ENCODE measurements at regions of chr3 and their contacts with region 1.

Region 1: DNA sequence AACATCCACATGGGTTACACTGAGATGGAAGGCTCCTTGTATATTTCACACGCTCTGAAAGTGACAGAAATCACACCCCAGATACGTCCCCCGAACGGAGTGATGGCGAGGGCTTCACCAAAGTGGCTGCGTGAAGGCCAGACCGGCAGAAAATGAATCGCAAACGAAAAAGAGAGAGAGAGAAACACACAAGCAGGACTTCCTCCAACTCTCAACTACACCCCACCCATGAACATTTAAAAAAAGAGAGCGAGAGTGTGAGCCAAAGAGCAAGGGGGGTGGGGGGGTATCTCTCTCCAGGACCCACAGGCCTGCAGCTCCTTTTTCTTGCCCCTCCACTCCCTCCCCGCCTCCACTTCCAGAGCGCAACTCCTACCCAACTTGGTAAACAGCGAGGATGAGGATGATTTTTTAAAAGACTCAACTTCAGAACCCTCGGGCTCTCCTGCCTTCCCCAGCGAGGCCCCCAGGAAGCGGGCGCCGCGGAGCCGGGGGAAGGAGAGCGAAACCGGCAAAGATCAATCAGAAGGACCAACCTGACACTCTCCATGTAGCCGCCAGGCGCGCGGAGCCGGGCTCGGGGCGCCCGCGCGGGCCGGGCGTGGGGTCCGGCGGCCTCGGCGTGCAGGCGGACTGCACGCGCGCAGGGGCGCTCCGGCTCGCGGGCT is 519.1 kb downstream of the FOXP1 start:
- DNase-seq: peak; percentile 69
- H3K4me3 Mint-ChIP-seq: no peak overlapping the region
- H3K27ac Mint-ChIP-seq: no peak overlapping the region
- H3K4me1 Mint-ChIP-seq: peaks cover 51% of the 10 kb centered on the region
- H3K27me3 Mint-ChIP-seq: no peaks in the 10 kb centered on the region

Region 2: DNA sequence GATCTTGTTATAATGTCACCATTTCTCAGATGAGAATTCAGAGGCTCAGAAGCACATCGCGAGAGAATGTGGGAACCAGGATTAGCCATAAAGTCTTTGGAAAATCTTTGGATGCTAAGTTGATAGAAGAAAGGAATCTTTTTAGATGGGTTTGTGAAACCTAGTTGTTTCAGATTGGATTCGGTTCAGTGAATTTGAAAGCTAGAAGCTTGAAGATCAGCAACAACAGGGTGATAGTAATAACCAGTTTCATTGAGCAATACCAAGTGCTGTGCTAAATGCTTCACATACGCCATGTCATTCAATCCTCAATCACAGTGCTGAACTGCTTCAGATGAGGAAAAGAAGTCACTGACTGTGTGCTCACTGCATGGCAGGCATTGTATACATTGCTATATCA is 1372.6 kb before region 1 on chr3:
- CTCF ChIA-PET with region 1: no interaction called
- intact Hi-C with region 1: no loop called
- DNase-seq: no peak
- H3K4me3 Mint-ChIP-seq: no peak overlapping the region
- H3K27ac Mint-ChIP-seq: no peak overlapping the region
- H3K4me1 Mint-ChIP-seq: no peaks in the 10 kb centered on the region
- H3K27me3 Mint-ChIP-seq: peaks cover 3% of the 10 kb centered on the region

Region 3: DNA sequence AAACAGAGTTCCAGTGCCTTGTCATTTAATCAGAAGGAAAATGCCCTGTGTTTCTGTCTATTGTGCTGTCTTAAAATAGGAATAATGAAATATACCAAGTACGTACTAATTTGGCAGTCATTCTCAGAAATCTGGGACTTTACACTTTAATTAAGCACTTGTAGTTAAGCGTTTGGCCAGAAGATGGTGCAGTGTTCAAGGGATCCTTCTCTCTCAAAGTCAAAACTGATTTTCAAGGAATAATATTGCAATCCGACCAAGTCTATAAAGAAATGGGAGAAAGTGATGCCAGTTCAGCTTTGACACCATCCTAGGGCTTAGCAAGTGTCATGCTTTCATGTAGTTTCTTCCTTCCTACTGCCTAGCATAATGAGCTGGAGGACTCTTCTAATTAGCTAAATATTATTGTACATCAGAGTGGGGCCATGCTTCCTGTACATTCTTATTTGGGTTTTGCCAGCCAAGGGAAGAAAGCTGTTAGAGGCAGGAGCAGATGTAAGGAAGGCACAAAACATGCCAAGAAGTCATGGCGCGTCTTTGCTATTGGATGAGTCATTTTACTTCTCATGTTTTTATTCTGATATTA is 1000.1 kb before region 1 on chr3:
- CTCF ChIA-PET with region 1: no interaction called
- intact Hi-C with region 1: no loop called
- DNase-seq: peak; percentile 26
- H3K4me3 Mint-ChIP-seq: no peak overlapping the region
- H3K27ac Mint-ChIP-seq: no peak overlapping the region
- H3K4me1 Mint-ChIP-seq: no peaks in the 10 kb centered on the region
- H3K27me3 Mint-ChIP-seq: peaks cover 15% of the 10 kb centered on the region

Region 4: DNA sequence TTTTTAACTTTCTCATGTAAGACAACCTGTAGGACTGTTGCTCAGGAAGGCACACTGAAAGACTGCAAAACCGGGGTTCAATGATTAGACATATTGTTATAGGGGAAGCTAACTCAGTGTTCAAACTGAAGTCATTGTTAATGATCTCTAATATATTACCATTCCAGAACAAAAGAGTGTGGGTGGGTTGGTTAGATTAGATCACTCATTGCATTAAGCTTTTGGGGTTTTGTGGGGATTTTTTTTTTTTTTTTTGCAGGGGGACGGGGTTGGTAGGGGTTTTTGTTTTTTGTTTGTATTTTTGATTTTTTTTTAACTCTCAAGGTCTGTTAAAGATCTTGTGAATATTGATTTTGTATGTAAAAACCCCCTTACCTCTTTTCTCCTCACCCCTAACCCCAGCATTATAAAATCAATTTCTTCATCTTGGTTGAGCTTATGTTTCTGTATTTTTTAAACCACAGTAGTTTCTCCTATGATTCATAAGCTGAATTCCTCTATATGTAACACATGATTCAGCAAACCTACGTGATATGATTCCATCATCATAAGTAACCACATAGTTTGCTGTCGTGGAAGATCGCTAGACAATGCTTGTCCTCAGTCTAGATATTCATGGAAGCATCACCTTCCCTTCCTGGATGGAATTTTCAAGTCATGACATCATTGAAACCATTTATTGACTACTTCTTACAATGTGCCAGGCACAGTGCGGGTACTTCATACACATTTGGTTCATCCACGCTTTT is 207.8 kb before region 1 on chr3:
- CTCF ChIA-PET with region 1: no interaction called
- intact Hi-C with region 1: loop called (anchors 2 kb)
- DNase-seq: peak; percentile 10
- H3K4me3 Mint-ChIP-seq: no peak overlapping the region
- H3K27ac Mint-ChIP-seq: no peak overlapping the region
- H3K4me1 Mint-ChIP-seq: peaks cover 28% of the 10 kb centered on the region
- H3K27me3 Mint-ChIP-seq: peaks cover 23% of the 10 kb centered on the region

Region 5: DNA sequence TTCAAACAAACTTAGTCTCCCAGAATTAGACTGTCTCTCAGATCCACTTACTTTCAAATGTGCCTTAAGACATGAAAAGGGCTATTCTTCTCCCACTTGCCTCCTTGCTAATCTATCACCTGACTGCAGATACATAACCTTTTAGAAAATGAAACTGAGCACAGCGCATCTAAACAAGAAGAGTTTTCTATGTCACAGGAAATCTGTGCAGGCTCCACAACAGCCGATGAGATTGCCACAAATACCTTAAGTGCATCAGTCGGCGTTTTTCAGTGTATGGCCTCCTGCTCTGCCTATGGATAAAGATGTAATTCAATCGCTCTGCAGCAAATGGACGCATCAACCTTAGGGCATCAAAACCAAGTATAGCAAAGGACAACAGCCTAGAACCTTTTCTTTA is 25.1 kb before region 1 on chr3:
- CTCF ChIA-PET with region 1: interaction called, 3 read pairs
- intact Hi-C with region 1: loop called (anchors 1 kb)
- DNase-seq: peak; percentile 48
- H3K4me3 Mint-ChIP-seq: peak overlapping the region; percentile 45
- H3K27ac Mint-ChIP-seq: peak overlapping the region; percentile 61
- H3K4me1 Mint-ChIP-seq: peaks cover 83% of the 10 kb centered on the region
- H3K27me3 Mint-ChIP-seq: no peaks in the 10 kb centered on the region

Region 6: DNA sequence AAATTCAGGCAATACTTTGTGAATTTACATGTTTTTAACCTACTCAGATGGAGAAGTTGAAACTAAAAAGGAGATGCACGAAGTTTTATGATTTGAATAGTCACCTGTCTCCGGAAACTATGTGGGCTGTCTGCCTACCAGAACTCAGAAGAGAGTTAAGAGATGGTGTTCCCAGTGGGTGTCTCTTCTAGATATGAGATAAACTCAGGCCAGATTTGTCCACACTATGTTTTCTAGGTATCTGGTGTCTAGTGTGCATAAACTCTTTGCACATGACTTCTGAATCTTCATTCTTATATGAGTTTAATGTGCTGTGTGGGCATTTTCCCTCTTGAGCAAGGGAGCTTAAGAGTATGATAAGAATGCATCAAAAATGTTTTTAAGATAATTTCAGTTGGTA is 296.3 kb after region 1 on chr3:
- CTCF ChIA-PET with region 1: no interaction called
- intact Hi-C with region 1: loop called (anchors 2 kb)
- DNase-seq: peak; percentile 43
- H3K4me3 Mint-ChIP-seq: peak overlapping the region; percentile 48
- H3K27ac Mint-ChIP-seq: peak overlapping the region; percentile 70
- H3K4me1 Mint-ChIP-seq: peaks cover 82% of the 10 kb centered on the region
- H3K27me3 Mint-ChIP-seq: no peaks in the 10 kb centered on the region

Region 7: DNA sequence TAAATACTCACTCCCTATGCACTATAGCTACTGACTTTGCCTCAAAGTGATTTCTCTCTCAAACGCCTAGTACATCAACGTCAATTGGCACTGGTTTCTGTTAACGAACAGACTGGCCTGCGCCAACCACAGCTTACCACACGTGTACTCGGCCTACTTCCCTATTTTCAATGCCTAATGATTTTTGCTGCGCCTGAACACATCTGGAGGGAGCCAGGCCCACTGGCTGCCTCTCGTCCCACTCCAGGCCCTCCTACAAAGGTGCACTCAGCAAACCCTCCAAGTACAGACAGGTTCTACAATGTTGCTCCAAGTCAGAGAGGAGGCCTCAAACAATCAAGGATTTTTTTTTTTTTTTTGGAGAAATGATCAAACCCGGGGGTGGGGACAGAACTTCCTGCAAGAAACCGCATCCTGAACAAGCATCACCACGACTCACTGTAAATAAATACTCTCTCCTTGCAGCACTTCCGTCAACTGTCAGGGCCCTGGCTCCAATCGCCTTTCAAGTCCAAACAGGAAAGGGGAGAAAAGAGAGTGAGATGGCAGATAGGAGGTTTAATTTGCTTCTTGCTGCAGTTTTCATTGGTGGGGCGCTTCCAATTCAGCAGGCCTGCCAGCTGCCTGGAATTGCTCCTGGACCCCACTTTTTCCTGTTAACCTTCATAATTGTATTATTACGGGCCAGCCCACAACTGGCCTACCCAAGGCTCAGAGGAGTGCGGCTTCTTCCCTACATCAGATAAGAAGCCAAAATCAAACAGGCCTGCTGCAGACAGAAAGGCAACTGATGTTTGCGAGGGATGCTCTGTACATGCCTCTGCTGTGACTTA is 379.8 kb after region 1 on chr3:
- CTCF ChIA-PET with region 1: no interaction called
- intact Hi-C with region 1: loop called (anchors 5 kb)
- DNase-seq: peak; percentile 80
- H3K4me3 Mint-ChIP-seq: peak overlapping the region; percentile 71
- H3K27ac Mint-ChIP-seq: peak overlapping the region; percentile 98
- H3K4me1 Mint-ChIP-seq: peaks cover 93% of the 10 kb centered on the region
- H3K27me3 Mint-ChIP-seq: no peaks in the 10 kb centered on the region

Measured in activated naive CD4-positive, alpha-beta T cell treated with anti-CD3 and anti-CD28 coated beads for 36 hours (primary cell).